ENCODE measurements at regions of chr14 and their contacts with region 1.

Region 1: GRCh38 chr14:23320774-23321571 is at the start of gene PABPN1:
- H3K4me3 ChIP-seq: peak within 1 kb of the TSS; percentile 97
- H3K27ac ChIP-seq: peak within 1 kb of the TSS; percentile 92
- H3K4me1 ChIP-seq: peaks cover 15% of the 10 kb centered on the region
- CTCF ChIP-seq: no peak

Region 2: GRCh38 chr14:23095196-23096108 is 225.5 kb before region 1 on chr14 and contains the start of gene C14orf119:
- CTCF ChIA-PET with region 1: no interaction called
- POLR2A ChIA-PET with region 1: interaction called, 17 read pairs
- H3K4me3 ChIP-seq: peak within 1 kb of the TSS; percentile 97
- H3K27ac ChIP-seq: peak within 1 kb of the TSS; percentile 92
- H3K4me1 ChIP-seq: peaks cover 10% of the 10 kb centered on the region; the same call in 1 of the 2 replicates
- CTCF ChIP-seq: no peak

Region 3: GRCh38 chr14:23286020-23286905 is 34.7 kb before region 1 on chr14 and contains the start of gene HOMEZ:
- CTCF ChIA-PET with region 1: no interaction called
- POLR2A ChIA-PET with region 1: interaction called, 21 read pairs
- H3K4me3 ChIP-seq: peak within 1 kb of the TSS; percentile 90
- H3K27ac ChIP-seq: peak within 1 kb of the TSS; percentile 96
- H3K4me1 ChIP-seq: peaks cover 12% of the 10 kb centered on the region
- CTCF ChIP-seq: 0 out of 2 replicates have a peak, but pooled peaks have one; percentile 31

Region 4: GRCh38 chr14:23301288-23301968 is 19.5 kb before region 1 on chr14:
- CTCF ChIA-PET with region 1: interaction called, 12 read pairs
- POLR2A ChIA-PET with region 1: interaction called, 170 read pairs
- H3K4me3 ChIP-seq: peak overlapping the region; percentile 66
- H3K27ac ChIP-seq: peak overlapping the region; percentile 97
- H3K4me1 ChIP-seq: peaks cover 13% of the 10 kb centered on the region; the same call in 1 of the 2 replicates
- CTCF ChIP-seq: peak; percentile 61; the same call in 1 of the 2 replicates

Region 5: GRCh38 chr14:23306410-23307145 is 14.4 kb before region 1 on chr14 and contains the start of gene BCL2L2:
- CTCF ChIA-PET with region 1: interaction called, 12 read pairs
- POLR2A ChIA-PET with region 1: interaction called, 170 read pairs
- H3K4me3 ChIP-seq: peak within 1 kb of the TSS; percentile 56
- H3K27ac ChIP-seq: peak within 1 kb of the TSS; percentile 85
- H3K4me1 ChIP-seq: peaks cover 6% of the 10 kb centered on the region; the same call in 1 of the 2 replicates
- CTCF ChIP-seq: no peak

Region 6: GRCh38 chr14:23379366-23380196 is 58.6 kb after region 1 on chr14:
- CTCF ChIA-PET with region 1: interaction called, 61 read pairs
- POLR2A ChIA-PET with region 1: interaction called, 12 read pairs
- H3K4me3 ChIP-seq: no peak overlapping the region
- H3K27ac ChIP-seq: no peak overlapping the region
- H3K4me1 ChIP-seq: no peaks in the 10 kb centered on the region
- CTCF ChIP-seq: peak; percentile 81

Region 7: DNA sequence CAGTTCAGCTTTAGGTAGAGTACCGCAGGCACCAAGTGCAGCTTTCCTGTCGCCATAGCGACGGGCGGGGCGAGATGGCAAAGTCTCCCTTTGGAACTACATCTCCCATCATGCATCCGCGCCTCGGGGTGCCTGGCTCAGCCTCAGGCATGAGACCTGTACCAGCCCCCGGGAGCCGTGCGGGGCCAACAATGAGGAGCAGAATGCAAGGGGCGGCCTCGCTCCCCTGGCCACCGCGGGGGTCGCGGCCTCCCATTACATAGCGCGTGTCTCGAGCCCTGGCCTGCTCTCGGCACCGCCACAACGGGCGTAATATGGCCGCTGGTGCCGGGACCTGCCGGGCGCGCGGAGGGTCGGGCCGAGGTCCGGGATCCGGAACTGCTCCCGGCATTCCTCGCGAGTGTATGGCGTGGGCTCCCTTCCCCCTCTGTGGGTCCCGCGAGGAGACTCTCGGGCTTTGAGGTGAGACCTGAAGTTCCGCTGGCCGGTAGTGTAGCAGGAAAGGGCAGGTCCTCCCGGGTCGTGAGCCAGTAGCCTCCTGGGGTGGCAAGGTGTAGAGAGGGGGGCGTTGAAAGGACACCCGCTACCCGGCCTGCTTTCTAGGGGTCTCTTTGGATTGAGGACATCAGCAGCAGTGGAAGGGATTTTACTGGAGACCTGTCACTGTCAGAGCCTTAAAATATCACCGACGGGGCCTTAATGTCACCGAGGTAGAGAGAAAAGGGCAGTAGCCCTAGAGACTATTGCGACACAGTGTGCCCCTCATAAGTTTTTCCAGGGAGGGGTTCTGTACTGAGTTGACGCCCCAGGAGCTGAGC is 235.1 kb after region 1 on chr14 and contains the start of gene THTPA:
- CTCF ChIA-PET with region 1: interaction called, 6 read pairs
- POLR2A ChIA-PET with region 1: interaction called, 10 read pairs
- H3K4me3 ChIP-seq: peak within 1 kb of the TSS; percentile 85
- H3K27ac ChIP-seq: peak within 1 kb of the TSS; percentile 81
- H3K4me1 ChIP-seq: peaks cover 10% of the 10 kb centered on the region
- CTCF ChIP-seq: no peak